ENCODE measurements at regions of chr2 and their contacts with region 1.

Region 1: DNA sequence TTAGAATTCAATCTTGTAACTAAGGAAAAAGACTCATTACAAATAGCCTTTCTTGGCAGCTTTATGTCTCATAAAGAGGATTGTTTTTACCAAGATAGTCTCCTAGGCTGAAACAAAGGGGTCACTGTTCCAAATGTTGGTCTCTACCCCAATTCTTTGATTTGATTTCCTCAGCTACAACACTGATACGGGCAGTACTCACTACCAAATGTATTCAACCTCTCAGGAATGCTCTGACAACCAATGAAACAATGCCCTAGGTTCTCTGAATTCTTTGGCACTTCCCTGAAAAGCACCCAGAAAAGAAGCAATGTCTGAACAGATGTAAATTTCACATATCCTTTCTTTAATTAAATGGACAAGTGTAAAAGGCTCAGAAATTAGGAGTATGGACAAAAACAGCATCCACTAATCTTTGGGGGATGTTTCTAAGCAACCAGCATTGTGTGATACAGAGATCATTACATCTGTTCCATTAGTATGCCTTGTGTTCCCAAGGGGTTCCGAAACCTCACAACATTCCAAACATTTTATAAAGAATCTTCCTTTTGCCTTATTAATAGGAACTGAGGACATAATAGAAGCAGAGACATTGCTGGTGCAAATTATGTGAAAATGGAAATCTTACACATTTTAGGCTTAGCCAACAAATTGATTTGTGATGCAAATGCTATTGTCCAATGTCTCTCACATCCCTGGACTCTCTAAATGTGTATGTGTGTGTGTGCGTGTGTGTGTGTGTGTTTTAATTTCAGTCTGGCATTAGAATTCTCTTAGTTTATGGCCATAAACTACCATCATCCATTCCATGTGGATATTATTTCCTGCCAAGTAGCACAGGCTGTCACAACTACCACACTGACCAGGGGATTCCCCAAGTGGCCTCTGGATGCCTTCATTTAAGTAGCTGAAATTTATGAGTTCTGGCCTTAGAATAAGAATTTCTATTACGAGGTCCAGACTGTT is 276.0 kb downstream of the MTX2 start:
- DNase-seq: peak; percentile 57
- H3K4me3 ChIP-seq: no peak overlapping the region
- H3K27ac ChIP-seq: peak overlapping the region; percentile 36
- H3K4me1 ChIP-seq: peaks cover 17% of the 10 kb centered on the region
- H3K27me3 ChIP-seq: no peaks in the 10 kb centered on the region

Region 2: GRCh38 chr2:176140513-176141317 is 404.6 kb before region 1 on chr2:
- in situ Hi-C with region 1: loop called (anchors 5 kb)
- DNase-seq: peak; percentile 89
- H3K4me3 ChIP-seq: peak overlapping the region; percentile 85
- H3K27ac ChIP-seq: peak overlapping the region; percentile 96
- H3K4me1 ChIP-seq: peaks cover 22% of the 10 kb centered on the region
- H3K27me3 ChIP-seq: no peaks in the 10 kb centered on the region

Region 3: GRCh38 chr2:176991411-176991810 is 446.1 kb after region 1 on chr2:
- in situ Hi-C with region 1: no loop called
- DNase-seq: no peak
- H3K4me3 ChIP-seq: no peak overlapping the region
- H3K27ac ChIP-seq: no peak overlapping the region
- H3K4me1 ChIP-seq: no peaks in the 10 kb centered on the region
- H3K27me3 ChIP-seq: no peaks in the 10 kb centered on the region; the same call in 1 of the 2 replicates

Measured in GM23248 (cell line).